Gastrocnemius medialis (tissue), 4 donors: ENCODE measurements at regions of chr7 and their contacts with region 1.

Region 1: GRCh38 chr7:41731492-41732435 is 28.9 kb upstream of the INHBA start:
- DNase-seq: no peak
- ATAC-seq: no peak
- H3K4me3 ChIP-seq: no peak overlapping the region
- H3K27ac ChIP-seq: no peak overlapping the region
- H3K4me1 ChIP-seq: no peaks in the 10 kb centered on the region
- H3K27me3 ChIP-seq: no peaks in the 10 kb centered on the region
- CTCF ChIP-seq: no peak
- POLR2A ChIP-seq: no peak

Region 2: DNA sequence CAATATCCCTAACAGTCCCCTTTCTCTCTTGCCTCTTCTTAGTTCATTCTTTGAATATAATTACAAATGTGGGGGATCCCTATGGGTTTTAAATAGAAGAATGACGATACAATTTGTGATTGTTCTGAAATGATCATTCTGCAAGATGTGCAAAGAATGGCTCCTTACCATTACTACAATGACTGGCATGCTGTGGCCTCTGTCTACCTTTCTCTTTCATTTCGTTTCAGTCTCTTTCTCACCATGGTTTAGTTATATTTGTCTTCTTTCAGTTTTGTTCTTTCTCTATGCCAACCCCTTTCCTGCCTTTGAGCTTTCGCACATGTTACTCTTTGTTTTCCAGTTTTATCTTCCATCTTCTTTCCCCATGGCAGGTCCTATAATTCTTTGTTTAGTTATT is 1420.5 kb before region 1 on chr7:
- in situ Hi-C with region 1: loop called in 1 of 4 experiments (anchors 25 kb)
- intact Hi-C with region 1: no loop called
- DNase-seq: no peak
- ATAC-seq: no peak
- H3K4me3 ChIP-seq: no peak overlapping the region
- H3K27ac ChIP-seq: no peak overlapping the region
- H3K4me1 ChIP-seq: no peaks in the 10 kb centered on the region
- H3K27me3 ChIP-seq: no peaks in the 10 kb centered on the region
- CTCF ChIP-seq: no peak
- POLR2A ChIP-seq: no peak

Region 3: GRCh38 chr7:41705109-41705901 is 26.5 kb before region 1 on chr7:
- in situ Hi-C with region 1: no loop called
- intact Hi-C with region 1: no loop called
- DNase-seq: peak; percentile 27 to 55
- ATAC-seq: peak; percentile 41 to 68
- H3K4me3 ChIP-seq: peak overlapping the region; percentile 50 to 53 (median 53)
- H3K27ac ChIP-seq: peak overlapping the region; percentile 20 to 54 (median 32)
- H3K4me1 ChIP-seq: peaks cover 5 to 12% of the 10 kb centered on the region in 2 donors
- H3K27me3 ChIP-seq: peaks cover 3 to 14% (median 7%) of the 10 kb centered on the region in 3 donors
- CTCF ChIP-seq: peak in 2 of 5 experiments; percentile 14
- POLR2A ChIP-seq: no peak